Endothelial cell of umbilical vein (primary cell): ENCODE measurements at regions of chr19 and their contacts with region 1.

Region 1: DNA sequence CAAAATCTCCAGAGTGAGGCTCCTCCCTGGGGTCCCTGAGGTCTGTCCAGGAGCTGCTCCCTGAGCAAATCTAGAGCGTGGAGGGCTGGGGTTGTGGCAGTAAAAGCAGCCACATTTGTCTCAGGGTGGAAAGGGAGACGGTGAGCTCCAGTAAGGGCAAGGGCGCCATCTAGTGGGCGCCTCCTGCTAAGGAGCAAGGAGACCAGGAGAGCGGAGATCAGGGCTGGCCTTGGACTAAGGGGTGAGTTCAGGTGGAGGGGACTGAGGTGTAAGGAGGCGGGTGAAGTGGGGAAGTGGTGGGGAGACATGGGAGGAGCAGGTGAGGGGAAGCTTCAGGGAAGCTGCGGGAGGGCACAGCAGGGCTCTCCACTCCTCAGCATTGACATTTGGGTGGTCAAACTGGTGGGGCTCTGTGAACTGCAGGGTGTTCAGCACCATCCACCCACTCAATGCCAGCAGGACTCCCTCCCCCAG is 5.3 kb upstream of the CEACAM21 start:
- DNase-seq: peak; percentile 70
- H3K4me3 ChIP-seq: no peak overlapping the region
- H3K27ac ChIP-seq: no peak overlapping the region
- H3K4me1 ChIP-seq: no peaks in the 10 kb centered on the region
- H3K27me3 ChIP-seq: peaks cover 19 to 36% of the 10 kb centered on the region in 2 experiments
- CTCF ChIP-seq: peak; percentile 82 to 95
- POLR2A ChIP-seq: no peak

Region 2: GRCh38 chr19:41321600-41322270 is 248.9 kb before region 1 on chr19:
- CTCF ChIA-PET with region 1: interaction called, 5 read pairs
- POLR2A ChIA-PET with region 1: no interaction called
- dilution Hi-C with region 1: no loop called
- intact Hi-C with region 1: loop called (anchors 5 kb)
- DNase-seq: peak; percentile 76
- H3K4me3 ChIP-seq: no peak overlapping the region
- H3K27ac ChIP-seq: peak overlapping the region; percentile 100
- H3K4me1 ChIP-seq: peaks cover 46% of the 10 kb centered on the region
- H3K27me3 ChIP-seq: no peaks in the 10 kb centered on the region
- CTCF ChIP-seq: peak; percentile 83 to 89
- POLR2A ChIP-seq: peak; percentile 38

Region 3: GRCh38 chr19:41449079-41449864 is 121.4 kb before region 1 on chr19:
- CTCF ChIA-PET with region 1: interaction called, 343 read pairs
- POLR2A ChIA-PET with region 1: no interaction called
- dilution Hi-C with region 1: no loop called
- intact Hi-C with region 1: loop called (anchors 1 kb)
- DNase-seq: peak; percentile 84
- H3K4me3 ChIP-seq: peak overlapping the region in 2 of 3 experiments; percentile 10 to 30
- H3K27ac ChIP-seq: no peak overlapping the region
- H3K4me1 ChIP-seq: no peaks in the 10 kb centered on the region
- H3K27me3 ChIP-seq: peaks cover 7% of the 10 kb centered on the region in 2 experiments
- CTCF ChIP-seq: peak; percentile 85 to 95
- POLR2A ChIP-seq: no peak

Region 4: GRCh38 chr19:41541990-41542584 is 28.6 kb before region 1 on chr19:
- CTCF ChIA-PET with region 1: interaction called, 18 read pairs
- POLR2A ChIA-PET with region 1: no interaction called
- dilution Hi-C with region 1: no loop called
- intact Hi-C with region 1: loop called (anchors 1 kb)
- DNase-seq: peak; percentile 67
- H3K4me3 ChIP-seq: no peak overlapping the region
- H3K27ac ChIP-seq: no peak overlapping the region
- H3K4me1 ChIP-seq: peaks cover 10% of the 10 kb centered on the region
- H3K27me3 ChIP-seq: peaks cover 4 to 14% of the 10 kb centered on the region in 2 experiments
- CTCF ChIP-seq: peak; percentile 70 to 73
- POLR2A ChIP-seq: no peak

Region 5: GRCh38 chr19:41554907-41555306 is 15.8 kb before region 1 on chr19:
- CTCF ChIA-PET with region 1: interaction called, 14 read pairs
- POLR2A ChIA-PET with region 1: no interaction called
- dilution Hi-C with region 1: no loop called
- intact Hi-C with region 1: loop called (anchors 2 kb)
- DNase-seq: peak; percentile 54
- H3K4me3 ChIP-seq: no peak overlapping the region
- H3K27ac ChIP-seq: no peak overlapping the region
- H3K4me1 ChIP-seq: peaks cover 13% of the 10 kb centered on the region
- H3K27me3 ChIP-seq: peaks cover 10 to 11% of the 10 kb centered on the region in 2 experiments
- CTCF ChIP-seq: no peak
- POLR2A ChIP-seq: no peak

Region 6: GRCh38 chr19:41616792-41617621 is 46.3 kb after region 1 on chr19:
- CTCF ChIA-PET with region 1: no interaction called
- POLR2A ChIA-PET with region 1: no interaction called
- dilution Hi-C with region 1: no loop called
- intact Hi-C with region 1: no loop called
- DNase-seq: peak; percentile 19
- H3K4me3 ChIP-seq: no peak overlapping the region
- H3K27ac ChIP-seq: no peak overlapping the region
- H3K4me1 ChIP-seq: no peaks in the 10 kb centered on the region
- H3K27me3 ChIP-seq: no peaks in the 10 kb centered on the region
- CTCF ChIP-seq: peak in 1 of 2 donors; percentile 4
- POLR2A ChIP-seq: no peak

Region 7: GRCh38 chr19:41668315-41668714 is 97.6 kb after region 1 on chr19:
- CTCF ChIA-PET with region 1: no interaction called
- POLR2A ChIA-PET with region 1: no interaction called
- dilution Hi-C with region 1: no loop called
- intact Hi-C with region 1: no loop called
- DNase-seq: no peak
- H3K4me3 ChIP-seq: no peak overlapping the region
- H3K27ac ChIP-seq: no peak overlapping the region
- H3K4me1 ChIP-seq: no peaks in the 10 kb centered on the region
- H3K27me3 ChIP-seq: peaks cover 0 to under 1% of the 10 kb centered on the region in 2 experiments
- CTCF ChIP-seq: no peak
- POLR2A ChIP-seq: no peak

Region 8: GRCh38 chr19:41904118-41904870 is 333.6 kb after region 1 on chr19:
- CTCF ChIA-PET with region 1: no interaction called
- POLR2A ChIA-PET with region 1: no interaction called
- dilution Hi-C with region 1: no loop called
- intact Hi-C with region 1: no loop called
- DNase-seq: no peak
- H3K4me3 ChIP-seq: no peak overlapping the region
- H3K27ac ChIP-seq: no peak overlapping the region
- H3K4me1 ChIP-seq: no peaks in the 10 kb centered on the region
- H3K27me3 ChIP-seq: no peaks in the 10 kb centered on the region
- CTCF ChIP-seq: no peak
- POLR2A ChIP-seq: no peak